ENCODE measurements at regions of chr4 and their contacts with region 1.

Region 1: GRCh38 chr4:76067652-76068286 is 6.7 kb upstream of the ART3 start:
- DNase-seq: peak; percentile 66 to 81 (median 70)
- H3K4me3 ChIP-seq: no peak overlapping the region
- H3K4me3 Mint-ChIP-seq: no peak overlapping the region
- H3K27ac ChIP-seq: no peak overlapping the region
- H3K27ac Mint-ChIP-seq: no peak overlapping the region
- H3K4me1 ChIP-seq: no peaks in the 10 kb centered on the region
- H3K4me1 Mint-ChIP-seq: no peaks in the 10 kb centered on the region
- H3K27me3 ChIP-seq: no peaks in the 10 kb centered on the region
- H3K27me3 Mint-ChIP-seq: peaks cover 0 to 3% (median 2%) of the 10 kb centered on the region in 3 donors
- CTCF ChIP-seq: peak; percentile 91

Region 2: DNA sequence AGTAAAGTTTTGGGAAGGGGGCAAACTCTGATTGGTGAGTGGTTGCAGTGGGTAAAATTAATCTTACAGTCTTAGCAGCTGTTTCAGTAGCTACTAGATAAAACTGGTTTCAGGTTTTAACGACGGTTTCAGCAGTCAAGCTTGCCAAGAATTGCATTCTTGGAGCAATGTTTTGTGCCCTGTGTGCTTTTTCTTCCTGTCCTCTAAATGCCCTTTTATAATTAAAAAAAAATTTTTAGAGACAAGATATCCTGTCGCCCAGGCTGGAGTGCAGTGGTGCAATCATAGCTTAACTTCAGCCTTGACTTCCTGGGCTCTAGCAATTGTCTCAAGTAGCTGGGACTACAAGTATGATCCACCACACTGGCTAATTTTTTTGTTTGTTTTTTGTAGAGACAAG is 159.2 kb before region 1 on chr4:
- intact Hi-C with region 1: loop called in 1 of 2 experiments (anchors 10 kb)
- DNase-seq: peak; percentile 16 to 32 (median 21)
- H3K4me3 ChIP-seq: peak overlapping the region in 1 of 3 experiments; percentile 34
- H3K4me3 Mint-ChIP-seq: peak overlapping the region in 1 of 2 donors; percentile 52
- H3K27ac ChIP-seq: peak overlapping the region; percentile 77 to 84
- H3K27ac Mint-ChIP-seq: peak overlapping the region; percentile 77 to 95 (median 88)
- H3K4me1 ChIP-seq: peaks cover 53 to 61% of the 10 kb centered on the region in 2 donors
- H3K4me1 Mint-ChIP-seq: peaks cover 41% of the 10 kb centered on the region
- H3K27me3 ChIP-seq: no peaks in the 10 kb centered on the region
- H3K27me3 Mint-ChIP-seq: peaks cover 0 to 1% (median 0%) of the 10 kb centered on the region in 3 donors
- CTCF ChIP-seq: no peak

Region 3: DNA sequence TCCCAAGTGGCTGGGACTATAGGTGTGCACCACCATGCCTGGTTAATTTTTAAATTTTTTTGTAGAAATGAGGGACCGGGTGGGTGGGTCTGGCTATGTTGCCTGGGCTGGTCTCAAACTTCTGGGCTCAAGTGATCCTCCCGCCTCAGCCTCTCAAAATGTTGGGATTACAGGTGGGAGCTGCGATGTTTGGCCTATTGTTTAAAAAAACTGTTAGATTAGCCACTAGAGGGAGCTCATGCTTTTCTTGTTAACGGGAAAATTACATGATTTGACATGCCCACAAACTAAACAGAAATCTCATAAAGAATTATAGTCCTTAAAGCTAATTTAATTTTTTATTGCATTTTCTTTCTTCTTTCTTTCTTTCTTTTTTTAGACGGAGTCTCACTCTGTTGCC is 72.0 kb before region 1 on chr4:
- intact Hi-C with region 1: loop called (anchors 1 to 2 kb)
- DNase-seq: peak; percentile 31 to 67 (median 46)
- H3K4me3 ChIP-seq: no peak overlapping the region
- H3K4me3 Mint-ChIP-seq: no peak overlapping the region
- H3K27ac ChIP-seq: no peak overlapping the region
- H3K27ac Mint-ChIP-seq: no peak overlapping the region
- H3K4me1 ChIP-seq: peaks cover 6% of the 10 kb centered on the region in 2 donors
- H3K4me1 Mint-ChIP-seq: peaks cover 3% of the 10 kb centered on the region
- H3K27me3 ChIP-seq: peaks cover 0 to 2% of the 10 kb centered on the region in 2 donors
- H3K27me3 Mint-ChIP-seq: peaks cover 1 to 7% (median 4%) of the 10 kb centered on the region in 3 donors
- CTCF ChIP-seq: peak; percentile 77